ENCODE measurements at regions of chr5 and their contacts with region 1.

Region 1: DNA sequence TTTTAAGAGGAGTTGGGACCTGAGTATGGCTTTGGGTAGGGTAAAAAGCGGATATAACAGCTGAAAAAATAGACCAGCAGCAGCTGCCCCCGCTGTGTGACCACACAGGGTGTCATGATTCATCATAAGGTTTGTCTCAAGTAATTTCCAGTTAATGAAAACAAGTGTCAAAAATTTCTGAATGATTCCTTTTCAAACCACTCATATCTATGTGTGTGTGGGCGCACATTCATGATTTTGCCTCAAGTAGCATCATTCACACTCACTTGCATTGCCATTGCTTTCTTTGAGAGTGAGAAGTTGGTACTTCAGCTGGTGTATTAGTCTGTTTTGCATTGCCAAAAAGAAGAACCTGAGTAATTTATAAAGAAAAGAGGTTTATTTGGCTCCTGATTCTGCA is 12.1 kb upstream of the TNFAIP8 start:
- DNase-seq: no peak
- H3K4me3 ChIP-seq: no peak overlapping the region
- CTCF ChIP-seq: no peak

Region 2: GRCh38 chr5:119332978-119333401 is 10.8 kb before region 1 on chr5:
- CTCF ChIA-PET with region 1: interaction called, 14 read pairs
- POLR2A ChIA-PET with region 1: no interaction called
- DNase-seq: no peak
- H3K4me3 ChIP-seq: no peak overlapping the region
- CTCF ChIP-seq: no peak